Activated CD4-positive, alpha-beta T cell treated with anti-CD3 and anti-CD28 coated beads for 36 hours (primary cell): ENCODE measurements at regions of chr20 and their contacts with region 1.

Region 1: DNA sequence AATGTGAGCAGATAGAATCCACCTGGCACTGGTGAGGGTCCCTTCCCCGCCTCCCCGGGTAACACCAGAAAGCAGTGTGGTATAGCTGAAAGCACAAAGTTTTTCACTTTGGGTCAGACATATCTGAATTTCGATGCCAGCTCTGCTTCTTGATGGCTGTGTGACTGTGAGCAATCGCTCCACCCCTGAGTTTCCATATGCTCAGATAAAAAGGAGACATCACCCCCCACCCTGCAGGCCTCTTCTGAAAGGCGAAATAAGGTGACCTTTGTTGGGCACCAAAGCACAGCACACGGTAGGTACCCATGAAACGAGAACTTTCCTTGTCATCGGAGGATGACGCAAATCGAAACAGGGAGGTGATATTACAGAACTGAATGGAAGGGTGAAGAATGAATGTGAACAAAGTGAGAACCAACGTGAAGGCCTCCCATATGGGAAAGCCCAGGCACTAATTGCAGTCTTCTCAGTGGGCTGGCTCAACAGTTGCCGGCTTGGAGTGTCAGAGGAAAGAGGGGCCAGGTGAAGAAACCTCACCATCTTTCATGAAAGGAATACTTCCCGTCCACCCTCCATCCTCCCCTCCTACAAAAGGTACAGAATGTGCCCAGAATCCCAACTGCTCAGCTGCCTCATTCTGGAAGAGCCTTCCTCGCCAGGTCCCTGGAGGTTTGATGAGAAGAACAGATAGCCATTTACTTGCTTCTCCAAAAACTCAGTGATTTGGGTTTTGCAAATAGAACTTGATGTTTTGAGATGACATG is 61.8 kb downstream of the NFATC2 start:
- DNase-seq: peak; percentile 89
- ATAC-seq: peak; percentile 83
- H3K4me3 Mint-ChIP-seq: peak overlapping the region; percentile 59
- H3K27ac Mint-ChIP-seq: peak overlapping the region; percentile 95
- H3K4me1 Mint-ChIP-seq: peaks cover 90% of the 10 kb centered on the region
- H3K27me3 Mint-ChIP-seq: no peaks in the 10 kb centered on the region

Region 2: GRCh38 chr20:51385646-51386530 is 94.8 kb before region 1 on chr20:
- CTCF ChIA-PET with region 1: interaction called, 3 read pairs
- POLR2A ChIA-PET with region 1: no interaction called
- intact Hi-C with region 1: loop called (anchors 1 to 5 kb)
- DNase-seq: peak; percentile 48
- ATAC-seq: no peak
- H3K4me3 Mint-ChIP-seq: no peak overlapping the region
- H3K27ac Mint-ChIP-seq: no peak overlapping the region
- H3K4me1 Mint-ChIP-seq: peaks cover 64% of the 10 kb centered on the region
- H3K27me3 Mint-ChIP-seq: no peaks in the 10 kb centered on the region

Region 3: DNA sequence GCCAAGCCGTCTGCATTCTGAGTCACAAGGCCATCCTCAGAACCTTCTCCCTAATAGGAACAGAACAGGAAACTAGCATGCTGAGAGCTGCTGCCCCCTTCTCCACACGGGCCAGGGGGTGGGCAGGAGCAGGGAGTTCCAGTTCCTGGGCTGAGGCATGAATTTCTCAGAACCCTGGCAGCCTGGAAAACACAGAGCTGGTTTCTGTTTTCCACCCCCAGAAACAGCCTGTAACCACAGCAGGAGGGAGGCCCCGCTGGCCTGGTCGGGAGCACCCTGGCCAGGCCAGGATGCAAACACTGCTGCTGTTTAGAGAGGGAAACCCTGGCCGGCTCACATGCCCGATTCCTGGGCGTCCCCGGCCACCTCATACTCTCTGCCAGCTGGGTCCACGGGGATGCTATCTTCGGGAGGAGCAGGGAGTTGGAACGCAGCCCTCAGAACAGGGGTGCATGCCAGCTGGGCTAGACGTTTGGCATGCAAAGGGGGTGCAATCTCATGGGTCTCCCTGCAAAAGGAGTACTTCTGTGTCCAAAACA is 68.3 kb before region 1 on chr20:
- CTCF ChIA-PET with region 1: no interaction called
- POLR2A ChIA-PET with region 1: no interaction called
- intact Hi-C with region 1: no loop called
- DNase-seq: no peak
- ATAC-seq: peak; percentile 23
- H3K4me3 Mint-ChIP-seq: no peak overlapping the region
- H3K27ac Mint-ChIP-seq: peak overlapping the region; percentile 25
- H3K4me1 Mint-ChIP-seq: peaks cover 72% of the 10 kb centered on the region
- H3K27me3 Mint-ChIP-seq: no peaks in the 10 kb centered on the region

Region 4: GRCh38 chr20:51423290-51423667 is 57.4 kb before region 1 on chr20:
- CTCF ChIA-PET with region 1: interaction called, 3 read pairs
- POLR2A ChIA-PET with region 1: no interaction called
- intact Hi-C with region 1: loop called in 1 of 2 experiments (anchors 1 kb)
- DNase-seq: peak; percentile 71
- ATAC-seq: peak; percentile 77
- H3K4me3 Mint-ChIP-seq: no peak overlapping the region
- H3K27ac Mint-ChIP-seq: peak overlapping the region; percentile 92
- H3K4me1 Mint-ChIP-seq: peaks cover 84% of the 10 kb centered on the region
- H3K27me3 Mint-ChIP-seq: no peaks in the 10 kb centered on the region

Region 5: DNA sequence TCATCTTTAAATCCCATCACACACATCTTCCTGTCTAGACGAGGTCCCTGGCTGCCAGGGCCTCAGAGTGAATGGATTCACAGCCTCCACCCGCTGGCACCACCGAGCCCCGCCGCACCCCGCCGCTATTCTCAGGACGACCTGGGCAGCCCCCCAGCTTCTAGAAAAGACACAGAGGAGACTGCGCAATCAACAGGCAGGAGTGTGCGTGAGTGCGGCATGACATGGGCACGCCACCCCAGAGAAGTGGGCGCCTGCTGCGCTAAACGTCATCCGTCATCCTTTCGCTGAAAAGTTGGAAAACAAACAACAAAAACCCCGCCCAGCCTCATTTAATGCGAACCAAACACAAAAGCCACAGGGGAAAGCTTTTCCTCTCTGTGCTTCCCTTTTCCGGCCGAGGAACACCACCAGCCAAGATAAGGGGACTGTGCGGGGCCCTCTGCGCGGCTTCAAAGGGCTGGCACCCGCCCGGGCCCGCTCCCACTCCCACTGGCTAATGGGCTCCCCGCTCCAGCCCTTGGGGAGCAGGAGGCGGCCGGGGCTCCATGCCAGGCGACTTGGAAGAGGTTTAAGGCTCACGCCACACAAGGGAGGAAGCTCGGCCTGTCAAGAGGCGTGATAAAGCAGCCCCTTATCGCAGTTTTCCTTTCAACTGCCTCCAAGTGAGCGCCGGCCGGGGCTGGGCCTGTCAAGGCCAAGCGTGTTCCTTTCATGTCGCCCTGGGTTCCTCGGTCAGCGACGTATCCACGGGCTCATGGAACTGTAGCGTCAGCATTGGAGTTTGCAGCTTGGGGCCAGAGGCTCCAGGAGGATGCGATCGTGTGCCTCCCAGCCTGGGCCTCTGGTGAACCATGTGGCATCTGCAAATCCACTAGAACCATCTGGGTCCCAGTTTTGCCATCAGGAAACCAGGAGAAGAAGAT is 11.7 kb after region 1 on chr20:
- CTCF ChIA-PET with region 1: interaction called, 10 read pairs
- POLR2A ChIA-PET with region 1: interaction called, 29 read pairs
- intact Hi-C with region 1: loop called in 1 of 2 experiments (anchors 1 kb)
- DNase-seq: peak; percentile 7
- ATAC-seq: no peak
- H3K4me3 Mint-ChIP-seq: no peak overlapping the region
- H3K27ac Mint-ChIP-seq: peak overlapping the region; percentile 97
- H3K4me1 Mint-ChIP-seq: peaks cover 97% of the 10 kb centered on the region
- H3K27me3 Mint-ChIP-seq: no peaks in the 10 kb centered on the region

Region 6: GRCh38 chr20:51512645-51513044 is 32.0 kb after region 1 on chr20:
- CTCF ChIA-PET with region 1: interaction called, 4 read pairs
- POLR2A ChIA-PET with region 1: interaction called, 9 read pairs
- intact Hi-C with region 1: loop called in 1 of 2 experiments (anchors 1 kb)
- DNase-seq: peak; percentile 52
- ATAC-seq: peak; percentile 92
- H3K4me3 Mint-ChIP-seq: peak overlapping the region; percentile 20
- H3K27ac Mint-ChIP-seq: peak overlapping the region; percentile 89
- H3K4me1 Mint-ChIP-seq: peaks cover 78% of the 10 kb centered on the region
- H3K27me3 Mint-ChIP-seq: no peaks in the 10 kb centered on the region

Region 7: DNA sequence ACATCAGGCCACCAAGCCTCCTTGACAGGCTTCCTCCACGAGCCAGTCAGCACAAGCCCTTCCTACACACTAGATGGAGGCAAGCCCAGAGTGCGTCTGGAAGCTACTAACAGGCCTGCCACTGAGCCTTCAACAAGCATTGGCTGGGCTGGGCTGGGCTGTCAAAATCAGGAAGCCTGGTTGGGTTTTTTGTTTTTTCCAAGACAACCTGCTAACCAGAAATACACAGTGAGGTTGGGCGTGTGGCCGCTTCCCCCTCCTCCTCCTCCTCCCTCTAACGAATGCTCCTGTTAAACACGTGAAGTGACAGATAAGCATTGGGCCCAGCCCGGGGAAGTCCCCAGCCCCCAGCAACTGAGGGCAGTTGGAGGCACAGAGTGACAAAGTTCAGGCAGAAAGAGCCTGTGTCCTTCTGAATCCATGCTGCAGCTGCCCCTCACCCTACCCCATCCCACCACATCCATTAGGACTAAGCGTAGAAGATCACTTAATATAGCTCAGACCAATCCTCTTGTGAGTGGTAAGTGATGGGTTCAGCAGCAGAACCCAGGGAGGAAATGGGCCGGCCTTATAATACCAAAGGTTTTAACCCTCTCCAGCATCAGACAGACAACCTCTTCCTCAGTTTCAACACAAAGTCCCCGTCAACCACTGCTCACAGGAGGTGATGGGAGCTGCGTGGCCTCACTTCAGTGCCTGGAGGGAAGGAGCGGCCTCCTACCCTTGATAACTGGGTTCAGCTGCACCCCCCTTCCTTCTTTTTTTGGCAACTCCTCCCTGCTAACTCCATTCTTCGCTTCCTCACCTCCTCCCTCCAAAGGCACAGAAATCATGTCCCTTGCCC is 60.7 kb after region 1 on chr20:
- CTCF ChIA-PET with region 1: interaction called, 5 read pairs
- POLR2A ChIA-PET with region 1: interaction called, 5 read pairs
- intact Hi-C with region 1: loop called (anchors 1 kb)
- DNase-seq: peak; percentile 90
- ATAC-seq: peak; percentile 84
- H3K4me3 Mint-ChIP-seq: peak overlapping the region; percentile 97
- H3K27ac Mint-ChIP-seq: peak overlapping the region; percentile 99
- H3K4me1 Mint-ChIP-seq: peaks cover 43% of the 10 kb centered on the region
- H3K27me3 Mint-ChIP-seq: peaks cover 8% of the 10 kb centered on the region